ENCODE measurements at regions of chr3 and their contacts with region 1.

Region 1: GRCh38 chr3:40317061-40317855 is 7.8 kb downstream of the EIF1B start:
- DNase-seq: peak; percentile 67 to 68
- H3K4me3 ChIP-seq: no peak overlapping the region
- H3K4me1 ChIP-seq: peaks cover 9% of the 10 kb centered on the region
- H3K27me3 ChIP-seq: no peaks in the 10 kb centered on the region

Region 2: GRCh38 chr3:39479701-39480414 is 837.4 kb before region 1 on chr3:
- in situ Hi-C with region 1: no loop called
- DNase-seq: no peak
- H3K4me3 ChIP-seq: no peak overlapping the region
- H3K4me1 ChIP-seq: no peaks in the 10 kb centered on the region; the same call in 1 of the 2 replicates
- H3K27me3 ChIP-seq: no peaks in the 10 kb centered on the region

Region 3: GRCh38 chr3:39937874-39938273 is 379.4 kb before region 1 on chr3:
- in situ Hi-C with region 1: no loop called
- DNase-seq: no peak
- H3K4me3 ChIP-seq: no peak overlapping the region
- H3K4me1 ChIP-seq: no peaks in the 10 kb centered on the region
- H3K27me3 ChIP-seq: no peaks in the 10 kb centered on the region

Region 4: GRCh38 chr3:40187945-40188344 is 129.3 kb before region 1 on chr3:
- in situ Hi-C with region 1: loop called (anchors 5 kb)
- DNase-seq: no peak
- H3K4me3 ChIP-seq: no peak overlapping the region
- H3K4me1 ChIP-seq: peaks cover 12% of the 10 kb centered on the region
- H3K27me3 ChIP-seq: no peaks in the 10 kb centered on the region